Heart right ventricle (tissue), 16 donors: ENCODE measurements at regions of chr10 and their contacts with region 1.

Region 1: DNA sequence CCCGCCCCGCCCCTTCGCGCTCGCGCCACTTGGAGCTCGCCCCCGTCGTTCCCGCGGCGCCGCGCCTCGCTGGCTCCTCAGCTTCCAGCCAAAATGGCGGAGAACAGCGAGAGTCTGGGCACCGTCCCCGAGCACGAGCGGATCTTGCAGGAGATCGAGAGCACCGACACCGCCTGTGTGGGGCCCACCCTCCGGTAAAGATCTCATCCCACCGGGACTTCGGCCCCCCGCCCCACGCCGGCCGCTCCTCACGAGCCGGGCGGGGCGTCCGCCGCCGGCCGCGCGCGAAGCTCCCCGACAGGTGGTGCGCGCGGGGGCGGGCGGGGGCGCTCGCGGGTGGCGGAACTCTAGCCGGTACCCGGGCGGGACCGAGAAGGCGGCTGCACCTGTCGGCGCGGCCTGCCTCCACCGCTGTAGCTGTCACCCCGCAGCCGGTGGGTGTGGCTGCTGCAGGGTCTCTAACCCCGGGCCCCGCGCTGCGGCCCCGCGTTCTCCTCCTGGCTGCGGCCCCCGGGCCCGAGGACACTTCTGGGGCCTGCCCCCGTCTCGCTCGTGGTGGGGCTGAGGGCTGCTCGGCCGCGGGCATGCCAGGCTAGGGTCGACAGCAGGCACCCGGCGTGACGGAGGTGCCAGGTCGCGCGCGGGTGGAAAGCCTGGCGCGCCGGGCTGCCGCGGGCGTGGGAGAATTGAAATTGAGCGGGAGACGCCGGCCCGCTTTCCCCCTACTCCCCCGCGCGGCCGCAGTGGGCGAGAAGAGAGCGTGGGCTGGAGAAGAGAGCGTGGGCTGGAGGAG is at the start of gene EXOC6:
- DNase-seq: peak; percentile 84 to 85
- ATAC-seq: peak; percentile 84 to 95 (median 92)
- H3K4me3 ChIP-seq: peak within 1 kb of the TSS; percentile 70 to 100 (median 96)
- H3K27ac ChIP-seq: peak within 1 kb of the TSS; percentile 73 to 94 (median 92)
- H3K4me1 ChIP-seq: peaks cover 0 to 38% (median 10%) of the 10 kb centered on the region in 9 donors
- H3K27me3 ChIP-seq: no peaks in the 10 kb centered on the region
- CTCF ChIP-seq: peak in 5 of 9 donors; percentile 2 to 20 (median 14)
- total RNA-seq, gene EXOC6: 8.7 to 11.7 (median 9.5) TPM

Region 2: GRCh38 chr10:92592761-92593618 is 255.6 kb before region 1 on chr10 and contains the start of gene KIF11:
- intact Hi-C with region 1: loop called in 1 of 10 experiments (anchors 10 kb)
- DNase-seq: peak; percentile 97
- ATAC-seq: peak; percentile 95 to 97 (median 96)
- H3K4me3 ChIP-seq: peak within 1 kb of the TSS; percentile 54 to 99 (median 71)
- H3K27ac ChIP-seq: peak within 1 kb of the TSS; percentile 76 to 98 (median 94)
- H3K4me1 ChIP-seq: peaks cover 0 to 49% (median 16%) of the 10 kb centered on the region in 9 donors
- H3K27me3 ChIP-seq: no peaks in the 10 kb centered on the region
- CTCF ChIP-seq: peak in 1 of 9 donors; percentile 9
- total RNA-seq, gene KIF11: 0.30 to 4.4 (median 0.84) TPM

Region 3: DNA sequence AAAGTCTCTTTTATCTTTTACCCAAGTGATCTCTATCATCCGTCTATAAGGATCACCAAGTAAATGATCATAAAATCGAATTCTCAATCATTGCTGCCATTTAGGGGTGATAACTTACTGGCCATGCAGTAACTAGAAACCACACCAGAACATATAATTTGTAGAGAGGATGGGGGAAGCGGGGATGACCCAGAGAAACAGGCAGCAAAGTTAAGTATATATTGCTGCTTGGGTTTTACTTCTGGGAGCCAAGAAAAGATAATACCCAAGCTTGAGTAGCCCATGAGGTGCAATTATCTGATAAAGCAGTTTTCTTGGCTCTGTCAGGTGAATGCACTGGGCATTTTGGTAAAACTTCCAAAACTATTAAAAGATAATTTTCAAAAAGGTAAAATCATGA is 18.6 kb after region 1 on chr10:
- intact Hi-C with region 1: no loop called
- DNase-seq: no peak
- ATAC-seq: no peak
- H3K4me3 ChIP-seq: no peak overlapping the region
- H3K27ac ChIP-seq: no peak overlapping the region
- H3K4me1 ChIP-seq: peaks cover 0 to 10% (median 0%) of the 10 kb centered on the region in 9 donors
- H3K27me3 ChIP-seq: no peaks in the 10 kb centered on the region
- CTCF ChIP-seq: no peak

Region 4: GRCh38 chr10:92901819-92902251 is 53.2 kb after region 1 on chr10:
- intact Hi-C with region 1: no loop called
- DNase-seq: no peak
- ATAC-seq: no peak
- H3K4me3 ChIP-seq: no peak overlapping the region
- H3K27ac ChIP-seq: no peak overlapping the region
- H3K4me1 ChIP-seq: no peaks in the 10 kb centered on the region
- H3K27me3 ChIP-seq: no peaks in the 10 kb centered on the region
- CTCF ChIP-seq: no peak